ENCODE measurements at regions of chr7 and their contacts with region 1.

Region 1: GRCh38 chr7:106009403-106010226 is 46.6 kb downstream of the CDHR3 start:
- DNase-seq: peak; percentile 94
- H3K4me3 Mint-ChIP-seq: no peak overlapping the region
- H3K27ac Mint-ChIP-seq: no peak overlapping the region
- H3K4me1 Mint-ChIP-seq: peaks cover 10% of the 10 kb centered on the region
- H3K27me3 Mint-ChIP-seq: peaks cover 50% of the 10 kb centered on the region

Region 2: GRCh38 chr7:105769901-105770628 is 239.6 kb before region 1 on chr7:
- intact Hi-C with region 1: loop called (anchors 1 kb)
- DNase-seq: no peak
- H3K4me3 Mint-ChIP-seq: no peak overlapping the region
- H3K27ac Mint-ChIP-seq: no peak overlapping the region
- H3K4me1 Mint-ChIP-seq: peaks cover 16% of the 10 kb centered on the region
- H3K27me3 Mint-ChIP-seq: peaks cover 28% of the 10 kb centered on the region

Region 3: DNA sequence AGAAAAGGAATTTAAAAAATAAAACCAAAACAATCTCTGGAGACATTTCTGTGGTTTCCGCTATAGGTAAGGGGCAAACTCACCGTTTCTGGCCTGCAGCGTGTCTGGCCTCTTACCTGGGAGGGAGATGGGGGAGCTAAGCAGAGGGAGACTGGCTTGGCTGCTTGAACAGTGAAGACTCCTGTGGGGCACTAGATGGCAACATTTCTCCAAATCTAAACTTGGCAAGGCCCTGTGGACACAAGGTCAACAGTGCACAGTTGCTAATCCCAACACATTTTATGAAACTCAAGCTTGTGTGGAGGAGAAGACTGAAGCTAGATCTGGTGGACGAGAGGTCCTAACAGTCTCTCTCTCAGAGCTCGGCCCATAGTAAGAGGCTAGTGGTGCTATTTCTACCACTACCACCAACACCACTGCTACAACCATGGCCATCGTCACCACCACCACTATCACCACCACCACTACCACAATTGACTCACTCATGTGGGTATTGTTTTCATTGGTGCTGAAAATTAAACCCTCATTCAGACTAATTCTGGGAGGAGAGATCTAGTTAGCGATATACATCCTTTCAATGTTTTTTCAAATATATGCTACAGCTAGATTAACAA is 74.9 kb before region 1 on chr7:
- intact Hi-C with region 1: loop called (anchors 2 kb)
- DNase-seq: no peak
- H3K4me3 Mint-ChIP-seq: no peak overlapping the region
- H3K27ac Mint-ChIP-seq: no peak overlapping the region
- H3K4me1 Mint-ChIP-seq: peaks cover 6% of the 10 kb centered on the region
- H3K27me3 Mint-ChIP-seq: peaks cover 32% of the 10 kb centered on the region

Region 4: DNA sequence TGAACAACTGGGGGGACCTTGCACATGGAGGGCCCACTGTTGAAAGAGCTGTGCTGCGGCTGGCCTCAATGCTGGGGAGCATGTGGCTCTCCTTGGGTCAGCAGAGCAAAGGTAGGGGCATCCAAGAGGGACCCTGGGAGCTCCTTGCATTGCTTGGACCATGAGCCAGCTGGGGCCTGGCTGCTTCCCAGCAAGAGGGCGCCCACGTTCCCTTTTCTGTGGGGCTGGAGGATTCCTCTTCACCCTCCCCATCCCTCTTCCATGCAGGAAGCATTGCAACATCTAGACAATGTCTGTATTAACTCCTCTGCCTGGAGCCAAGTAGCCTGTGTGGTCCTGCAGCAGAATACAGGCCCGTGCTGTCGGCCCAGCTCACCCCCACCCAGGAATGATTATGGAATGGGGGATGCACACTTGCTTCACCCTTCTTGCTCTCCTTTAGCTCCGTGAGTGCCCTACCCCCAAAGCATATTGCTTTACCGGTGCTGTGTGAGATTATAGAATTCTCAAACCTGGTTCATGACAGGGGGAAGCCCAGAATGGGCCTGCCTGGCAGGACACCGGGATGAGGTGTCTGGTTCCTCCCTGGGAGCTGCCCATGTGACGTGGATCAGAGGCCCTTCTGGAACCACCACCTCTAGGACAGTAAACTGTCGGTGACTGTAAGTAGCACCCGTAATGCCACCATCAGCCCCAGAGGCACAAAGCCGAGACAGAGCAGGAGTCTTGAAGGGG is 40.6 kb after region 1 on chr7:
- intact Hi-C with region 1: no loop called
- DNase-seq: no peak
- H3K4me3 Mint-ChIP-seq: no peak overlapping the region
- H3K27ac Mint-ChIP-seq: no peak overlapping the region
- H3K4me1 Mint-ChIP-seq: no peaks in the 10 kb centered on the region
- H3K27me3 Mint-ChIP-seq: peaks cover 17% of the 10 kb centered on the region

Region 5: DNA sequence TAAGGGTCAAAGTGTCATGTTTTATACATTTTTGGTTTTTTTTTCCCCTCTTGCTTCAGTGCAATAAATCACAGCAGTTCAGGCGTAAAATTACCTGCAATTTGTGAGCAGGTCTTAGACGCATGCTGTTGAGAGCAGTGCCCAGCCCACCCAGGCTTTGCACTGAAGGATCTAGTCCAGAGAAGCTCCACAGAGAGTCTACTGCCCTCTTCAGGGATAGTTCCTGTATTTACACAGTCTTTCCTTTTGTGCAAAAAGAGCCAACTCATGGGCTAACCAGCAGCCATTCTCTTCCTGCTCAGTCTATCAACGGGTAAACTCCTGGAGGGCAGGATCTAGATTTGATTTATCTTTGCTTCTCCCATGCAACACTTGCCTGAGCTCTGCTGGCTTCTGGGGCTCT is 357.4 kb after region 1 on chr7:
- intact Hi-C with region 1: no loop called
- DNase-seq: no peak
- H3K4me3 Mint-ChIP-seq: no peak overlapping the region
- H3K27ac Mint-ChIP-seq: peak overlapping the region; percentile 59
- H3K4me1 Mint-ChIP-seq: peaks cover 26% of the 10 kb centered on the region
- H3K27me3 Mint-ChIP-seq: peaks cover 14% of the 10 kb centered on the region

Measured in activated CD4-positive, alpha-beta T cell treated with anti-CD3 and anti-CD28 coated beads, Interleukin-2, amount 10 ng/mL, durations not matched to agents 24 days and 14 days (primary cell).